Heart right ventricle (tissue), 16 donors: ENCODE measurements at regions of chr9 and their contacts with region 1.

Region 1: GRCh38 chr9:70602321-70603019 is 188.0 kb upstream of the KLF9 start:
- DNase-seq: peak in 1 of 2 donors; percentile 72
- ATAC-seq: peak; percentile 19 to 80 (median 72)
- H3K4me3 ChIP-seq: peak overlapping the region in 7 of 10 donors; percentile 3 to 36 (median 32)
- H3K27ac ChIP-seq: peak overlapping the region; percentile 80 to 94 (median 88)
- H3K4me1 ChIP-seq: peaks cover 6 to 35% (median 29%) of the 10 kb centered on the region in 9 donors
- H3K27me3 ChIP-seq: no peaks in the 10 kb centered on the region
- CTCF ChIP-seq: peak; percentile 72 to 87 (median 78)

Region 2: GRCh38 chr9:70136632-70137031 is 465.8 kb before region 1 on chr9:
- intact Hi-C with region 1: loop called in 1 of 10 experiments (anchors 10 kb)
- DNase-seq: no peak
- ATAC-seq: peak in 1 of 8 donors; percentile 25
- H3K4me3 ChIP-seq: no peak overlapping the region
- H3K27ac ChIP-seq: no peak overlapping the region
- H3K4me1 ChIP-seq: peaks cover 0 to 8% (median 0%) of the 10 kb centered on the region in 9 donors
- H3K27me3 ChIP-seq: no peaks in the 10 kb centered on the region
- CTCF ChIP-seq: no peak

Region 3: GRCh38 chr9:70340572-70340971 is 261.9 kb before region 1 on chr9:
- intact Hi-C with region 1: loop called in 6 of 10 experiments (anchors 1 to 5 kb)
- DNase-seq: no peak
- ATAC-seq: no peak
- H3K4me3 ChIP-seq: no peak overlapping the region
- H3K27ac ChIP-seq: no peak overlapping the region
- H3K4me1 ChIP-seq: peaks cover 0 to 8% (median 0%) of the 10 kb centered on the region in 9 donors
- H3K27me3 ChIP-seq: no peaks in the 10 kb centered on the region
- CTCF ChIP-seq: peak in 7 of 9 donors; percentile 48 to 71 (median 66)

Region 4: DNA sequence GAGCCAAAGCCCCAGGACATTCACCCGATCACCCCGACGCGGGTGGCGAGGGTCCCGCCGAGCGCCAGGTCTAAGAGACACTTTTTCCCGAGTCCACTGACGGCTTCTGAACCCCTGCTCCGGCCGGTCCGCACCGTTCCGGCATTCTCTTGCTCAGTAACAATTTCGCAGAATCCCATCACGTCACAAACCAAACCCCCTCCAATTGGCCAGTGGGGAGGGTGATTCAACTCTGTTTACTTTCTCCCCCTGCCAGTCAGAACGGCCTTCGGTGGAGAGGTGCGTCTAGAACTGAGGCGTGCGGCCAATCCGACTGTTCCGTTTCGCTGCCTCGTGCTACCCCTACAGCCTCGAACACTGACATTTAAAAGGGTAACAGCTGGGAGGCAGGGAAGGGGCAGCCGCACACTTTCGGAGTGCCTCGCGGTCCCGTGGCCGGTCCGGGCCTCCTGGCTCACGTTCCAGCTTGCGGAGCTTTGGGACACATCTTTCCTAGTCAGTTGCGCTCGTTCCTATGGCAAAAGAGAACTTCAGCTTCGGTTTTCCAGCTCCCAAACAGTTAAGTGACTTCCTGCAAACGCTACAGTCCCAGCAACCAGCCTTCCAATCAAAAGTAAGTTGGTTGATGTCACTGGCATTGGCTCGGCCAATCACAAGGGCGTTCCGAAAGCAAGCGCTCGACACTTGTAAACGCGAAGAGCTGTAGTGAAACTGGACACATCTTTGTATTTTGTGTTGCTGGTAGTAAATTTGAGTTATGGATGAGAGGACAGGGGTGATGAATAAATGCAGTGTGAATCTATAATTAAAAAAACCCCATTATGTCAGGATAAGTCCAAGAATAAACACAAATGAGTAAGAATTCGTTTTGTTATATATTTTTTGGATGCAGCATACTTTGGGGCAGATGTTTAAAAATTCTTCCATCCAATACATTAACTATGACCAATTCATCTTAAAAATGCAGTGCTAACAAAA is 188.4 kb before region 1 on chr9 and contains the start of gene KLF9:
- intact Hi-C with region 1: loop called in 6 of 10 experiments (anchors 2 to 10 kb)
- DNase-seq: peak; percentile 87 to 96
- ATAC-seq: peak; percentile 74 to 85 (median 81)
- H3K4me3 ChIP-seq: peak within 1 kb of the TSS; percentile 69 to 99 (median 78)
- H3K27ac ChIP-seq: peak within 1 kb of the TSS; percentile 99 to 100 (median 100)
- H3K4me1 ChIP-seq: peaks cover 12 to 67% (median 60%) of the 10 kb centered on the region in 9 donors
- H3K27me3 ChIP-seq: no peaks in the 10 kb centered on the region
- CTCF ChIP-seq: peak in 1 of 9 donors; percentile 10
- total RNA-seq, gene KLF9: 27.3 to 67.4 (median 41.1) TPM

Region 5: DNA sequence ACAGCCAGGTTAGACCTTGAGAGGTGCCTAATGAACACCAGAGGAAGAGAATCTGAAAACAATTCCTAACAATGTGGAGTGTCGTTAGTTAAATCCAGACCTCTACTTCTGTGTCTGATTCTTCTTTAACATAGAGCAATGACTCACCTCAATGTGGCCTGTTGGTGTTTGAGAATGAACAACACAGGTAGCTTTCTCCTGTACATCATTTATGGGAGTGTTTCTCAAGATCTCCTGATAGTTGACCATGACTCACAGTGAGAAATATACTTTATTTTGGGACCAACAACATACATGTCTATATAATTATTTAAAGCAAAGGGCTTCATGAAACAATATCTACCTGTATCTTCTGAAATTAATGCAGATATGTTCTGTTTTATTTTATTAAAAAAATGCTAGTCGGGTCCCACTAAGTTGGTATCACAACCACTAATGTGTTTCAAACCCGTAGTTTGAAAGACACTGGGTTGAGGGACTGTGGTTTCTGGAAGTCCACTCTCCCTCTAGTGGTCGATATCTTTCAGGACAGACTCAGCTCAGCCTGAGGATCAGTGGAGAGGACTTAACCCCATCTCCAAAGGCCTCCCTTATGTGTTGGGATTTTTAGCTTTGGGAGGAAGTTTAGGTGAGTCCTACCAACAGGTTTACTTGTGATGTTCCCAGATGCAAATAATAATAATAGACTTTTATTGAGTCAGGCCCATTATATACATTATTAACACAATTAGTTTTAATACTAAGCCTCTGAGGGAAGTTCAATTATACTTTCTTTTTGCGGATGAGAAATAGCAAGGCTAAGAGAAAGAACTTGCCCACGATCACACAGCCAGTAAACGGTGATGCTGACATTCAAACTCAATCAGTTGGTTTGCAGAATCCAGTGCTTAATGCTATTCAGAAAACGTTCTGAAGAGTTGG is 118.0 kb before region 1 on chr9:
- intact Hi-C with region 1: loop called in 8 of 10 experiments (anchors 1 to 10 kb)
- DNase-seq: peak in 1 of 2 donors; percentile 67
- ATAC-seq: peak; percentile 57 to 86 (median 78)
- H3K4me3 ChIP-seq: no peak overlapping the region
- H3K27ac ChIP-seq: peak overlapping the region; percentile 26 to 80 (median 68)
- H3K4me1 ChIP-seq: peaks cover 19 to 82% (median 71%) of the 10 kb centered on the region in 9 donors
- H3K27me3 ChIP-seq: no peaks in the 10 kb centered on the region
- CTCF ChIP-seq: peak; percentile 56 to 87 (median 82)

Region 6: DNA sequence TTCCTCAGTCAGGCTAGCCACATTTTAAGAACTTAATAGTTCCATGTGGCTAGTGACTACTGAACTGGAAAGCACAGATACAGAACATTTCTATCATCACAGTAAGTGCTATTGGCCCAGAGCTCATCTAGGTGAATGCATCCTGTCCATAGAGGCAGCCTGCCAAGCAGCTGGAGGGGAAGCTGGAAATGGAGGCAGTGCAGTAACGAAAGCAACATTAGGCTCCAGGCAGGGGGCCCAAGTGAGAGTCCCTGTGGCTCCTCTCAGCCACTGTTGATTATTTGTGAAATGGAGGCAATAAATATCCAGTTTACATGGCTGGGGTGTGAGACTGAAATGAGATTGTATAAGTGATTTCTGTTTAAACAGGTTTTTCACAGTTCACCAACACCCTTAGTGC is 39.2 kb after region 1 on chr9:
- intact Hi-C with region 1: no loop called
- DNase-seq: no peak
- ATAC-seq: no peak
- H3K4me3 ChIP-seq: no peak overlapping the region
- H3K27ac ChIP-seq: no peak overlapping the region
- H3K4me1 ChIP-seq: no peaks in the 10 kb centered on the region
- H3K27me3 ChIP-seq: no peaks in the 10 kb centered on the region
- CTCF ChIP-seq: no peak

Region 7: GRCh38 chr9:70701163-70701562 is 98.7 kb after region 1 on chr9:
- intact Hi-C with region 1: no loop called
- DNase-seq: no peak
- ATAC-seq: peak in 6 of 8 donors; percentile 56 to 85 (median 76)
- H3K4me3 ChIP-seq: no peak overlapping the region
- H3K27ac ChIP-seq: no peak overlapping the region
- H3K4me1 ChIP-seq: no peaks in the 10 kb centered on the region
- H3K27me3 ChIP-seq: no peaks in the 10 kb centered on the region
- CTCF ChIP-seq: no peak